B cell (primary cell): ENCODE measurements at regions of chr15 and their contacts with region 1.

Region 1: GRCh38 chr15:90233376-90234095 is at the start of gene CIB1:
- DNase-seq: no peak
- ATAC-seq: peak; percentile 87
- H3K4me3 ChIP-seq: peak within 1 kb of the TSS; percentile 85 to 99 (median 92)
- H3K4me3 Mint-ChIP-seq: peak within 1 kb of the TSS; percentile 97
- H3K27ac ChIP-seq: peak within 1 kb of the TSS; percentile 88 to 99
- H3K27ac Mint-ChIP-seq: peak within 1 kb of the TSS; percentile 97
- H3K4me1 ChIP-seq: peaks cover 40 to 50% of the 10 kb centered on the region in 2 donors
- H3K4me1 Mint-ChIP-seq: peaks cover 52% of the 10 kb centered on the region
- H3K27me3 ChIP-seq: no peaks in the 10 kb centered on the region
- H3K27me3 Mint-ChIP-seq: no peaks in the 10 kb centered on the region
- CTCF ChIP-seq: no peak
- total RNA-seq, gene CIB1: 139 and 153 TPM in 2 replicates

Region 2: GRCh38 chr15:90184786-90185569 is 48.6 kb before region 1 on chr15:
- CTCF ChIA-PET with region 1: interaction called, 44 read pairs
- POLR2A ChIA-PET with region 1: interaction called, 49 read pairs
- intact Hi-C with region 1: loop called (anchors 1 kb)
- DNase-seq: peak; percentile 89
- ATAC-seq: peak; percentile 76
- H3K4me3 ChIP-seq: peak overlapping the region; percentile 61 to 79 (median 77)
- H3K4me3 Mint-ChIP-seq: peak overlapping the region; percentile 98
- H3K27ac ChIP-seq: peak overlapping the region; percentile 81 to 88
- H3K27ac Mint-ChIP-seq: peak overlapping the region; percentile 97
- H3K4me1 ChIP-seq: peaks cover 56 to 68% of the 10 kb centered on the region in 2 donors
- H3K4me1 Mint-ChIP-seq: peaks cover 67% of the 10 kb centered on the region
- H3K27me3 ChIP-seq: no peaks in the 10 kb centered on the region
- H3K27me3 Mint-ChIP-seq: no peaks in the 10 kb centered on the region
- CTCF ChIP-seq: no peak

Region 3: GRCh38 chr15:90201130-90201949 is 32.2 kb before region 1 on chr15 and contains the start of gene SEMA4B:
- CTCF ChIA-PET with region 1: interaction called, 9 read pairs
- POLR2A ChIA-PET with region 1: interaction called, 9 read pairs
- intact Hi-C with region 1: loop called (anchors 1 kb)
- DNase-seq: peak; percentile 84
- ATAC-seq: peak; percentile 89
- H3K4me3 ChIP-seq: peak within 1 kb of the TSS; percentile 79 to 94 (median 86)
- H3K4me3 Mint-ChIP-seq: peak within 1 kb of the TSS; percentile 93
- H3K27ac ChIP-seq: peak within 1 kb of the TSS; percentile 52 to 72
- H3K27ac Mint-ChIP-seq: peak within 1 kb of the TSS; percentile 95
- H3K4me1 ChIP-seq: peaks cover 64 to 78% of the 10 kb centered on the region in 2 donors
- H3K4me1 Mint-ChIP-seq: peaks cover 73% of the 10 kb centered on the region
- H3K27me3 ChIP-seq: no peaks in the 10 kb centered on the region
- H3K27me3 Mint-ChIP-seq: no peaks in the 10 kb centered on the region
- CTCF ChIP-seq: no peak
- total RNA-seq, gene SEMA4B: 334 and 336 TPM in 2 replicates

Region 4: GRCh38 chr15:90221246-90221900 is 12.2 kb before region 1 on chr15:
- CTCF ChIA-PET with region 1: interaction called, 102 read pairs
- POLR2A ChIA-PET with region 1: interaction called, 56 read pairs
- intact Hi-C with region 1: loop called (anchors 1 kb)
- DNase-seq: no peak
- ATAC-seq: no peak
- H3K4me3 ChIP-seq: no peak overlapping the region
- H3K4me3 Mint-ChIP-seq: peak overlapping the region; percentile 23
- H3K27ac ChIP-seq: peak overlapping the region in 1 of 2 donors; percentile 39
- H3K27ac Mint-ChIP-seq: peak overlapping the region; percentile 72
- H3K4me1 ChIP-seq: peaks cover 41 to 50% of the 10 kb centered on the region in 2 donors
- H3K4me1 Mint-ChIP-seq: peaks cover 52% of the 10 kb centered on the region
- H3K27me3 ChIP-seq: no peaks in the 10 kb centered on the region
- H3K27me3 Mint-ChIP-seq: no peaks in the 10 kb centered on the region
- CTCF ChIP-seq: peak; percentile 36

Region 5: DNA sequence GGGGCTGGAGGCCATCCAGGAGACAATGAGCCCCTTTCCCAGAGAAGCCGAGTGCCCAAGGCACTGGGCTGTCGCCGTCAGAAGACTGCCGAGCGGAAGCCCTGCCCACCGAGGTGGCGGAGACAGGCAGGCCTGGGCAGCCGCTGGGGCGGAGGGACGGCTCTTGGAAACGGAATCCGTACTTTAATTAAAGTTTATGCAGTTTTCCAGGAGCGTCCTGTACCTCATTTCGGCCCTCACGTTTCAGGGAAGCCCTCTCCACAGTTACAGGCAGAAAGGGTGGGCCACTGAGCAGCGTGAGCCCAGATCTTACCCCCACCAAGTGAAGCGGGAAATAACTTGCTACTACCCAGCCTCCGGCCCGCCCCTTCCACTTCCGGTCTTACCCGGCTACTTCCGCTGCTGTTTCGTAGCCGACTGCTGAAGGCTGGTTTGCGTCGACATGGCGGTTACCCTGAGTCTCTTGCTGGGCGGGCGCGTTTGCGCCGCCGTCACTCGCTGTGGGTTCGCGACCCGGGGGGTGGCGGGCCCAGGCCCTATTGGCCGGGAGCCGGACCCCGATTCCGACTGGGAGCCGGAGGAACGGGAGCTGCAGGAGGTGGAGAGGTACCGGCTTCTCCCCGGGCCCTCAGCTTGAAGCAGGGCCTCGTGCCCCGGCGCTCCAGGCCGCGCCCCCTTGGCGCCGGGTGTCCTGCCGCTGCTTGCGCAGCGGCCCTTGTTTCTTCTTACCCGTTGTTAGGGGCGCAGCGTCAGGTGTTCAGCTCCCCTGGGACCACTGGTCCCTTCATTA is 31.9 kb after region 1 on chr15 and contains the start of gene NGRN:
- CTCF ChIA-PET with region 1: interaction called, 9 read pairs
- POLR2A ChIA-PET with region 1: interaction called, 14 read pairs
- intact Hi-C with region 1: loop called (anchors 1 kb)
- DNase-seq: peak; percentile 97
- ATAC-seq: peak; percentile 86
- H3K4me3 ChIP-seq: peak within 1 kb of the TSS; percentile 69 to 83 (median 79)
- H3K4me3 Mint-ChIP-seq: peak within 1 kb of the TSS; percentile 95
- H3K27ac ChIP-seq: peak within 1 kb of the TSS; percentile 95 to 99
- H3K27ac Mint-ChIP-seq: peak within 1 kb of the TSS; percentile 98
- H3K4me1 ChIP-seq: peaks cover 36 to 38% of the 10 kb centered on the region in 2 donors
- H3K4me1 Mint-ChIP-seq: peaks cover 52% of the 10 kb centered on the region
- H3K27me3 ChIP-seq: no peaks in the 10 kb centered on the region
- H3K27me3 Mint-ChIP-seq: no peaks in the 10 kb centered on the region
- CTCF ChIP-seq: no peak
- total RNA-seq, gene NGRN: 42.6 and 45.5 TPM in 2 replicates

Region 6: GRCh38 chr15:90387537-90388461 is 154.3 kb after region 1 on chr15 and contains the start of gene IQGAP1:
- CTCF ChIA-PET with region 1: no interaction called
- POLR2A ChIA-PET with region 1: interaction called, 7 read pairs
- intact Hi-C with region 1: loop called (anchors 1 kb)
- DNase-seq: peak; percentile 97
- ATAC-seq: peak; percentile 86
- H3K4me3 ChIP-seq: peak within 1 kb of the TSS; percentile 72 to 93 (median 87)
- H3K4me3 Mint-ChIP-seq: peak within 1 kb of the TSS; percentile 92
- H3K27ac ChIP-seq: peak within 1 kb of the TSS; percentile 91 to 95
- H3K27ac Mint-ChIP-seq: peak within 1 kb of the TSS; percentile 99
- H3K4me1 ChIP-seq: peaks cover 22 to 26% of the 10 kb centered on the region in 2 donors
- H3K4me1 Mint-ChIP-seq: peaks cover 36% of the 10 kb centered on the region
- H3K27me3 ChIP-seq: no peaks in the 10 kb centered on the region
- H3K27me3 Mint-ChIP-seq: no peaks in the 10 kb centered on the region
- CTCF ChIP-seq: no peak
- total RNA-seq, gene IQGAP1: 216 and 233 TPM in 2 replicates